ENCODE measurements at regions of chr7 and their contacts with region 1.

Region 1: DNA sequence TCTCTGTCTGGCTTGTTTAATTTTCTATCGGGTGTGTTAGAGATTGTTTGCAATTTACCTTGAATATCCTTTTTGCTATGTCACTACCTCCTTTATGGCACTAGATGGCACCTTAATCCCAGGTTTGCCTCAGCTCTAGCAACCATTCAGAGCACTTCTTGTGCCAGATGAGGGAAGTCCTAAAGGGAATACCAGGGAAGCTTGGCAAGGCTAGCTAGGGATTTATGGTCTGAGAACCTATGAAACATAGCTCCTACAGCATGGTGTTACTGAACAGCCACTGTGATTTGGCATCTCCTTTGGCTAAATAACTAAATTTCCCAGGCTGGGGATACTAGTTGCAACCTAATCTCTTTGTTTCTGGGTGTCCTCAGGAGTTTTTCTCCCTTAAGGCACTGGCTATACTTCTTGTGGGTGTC is 69.0 kb upstream of the VOPP1 start:
- DNase-seq: peak; percentile 84
- H3K4me3 Mint-ChIP-seq: no peak overlapping the region
- H3K27ac Mint-ChIP-seq: no peak overlapping the region
- H3K4me1 Mint-ChIP-seq: no peaks in the 10 kb centered on the region
- H3K27me3 Mint-ChIP-seq: no peaks in the 10 kb centered on the region
- CTCF ChIP-seq: peak; percentile 64

Region 2: DNA sequence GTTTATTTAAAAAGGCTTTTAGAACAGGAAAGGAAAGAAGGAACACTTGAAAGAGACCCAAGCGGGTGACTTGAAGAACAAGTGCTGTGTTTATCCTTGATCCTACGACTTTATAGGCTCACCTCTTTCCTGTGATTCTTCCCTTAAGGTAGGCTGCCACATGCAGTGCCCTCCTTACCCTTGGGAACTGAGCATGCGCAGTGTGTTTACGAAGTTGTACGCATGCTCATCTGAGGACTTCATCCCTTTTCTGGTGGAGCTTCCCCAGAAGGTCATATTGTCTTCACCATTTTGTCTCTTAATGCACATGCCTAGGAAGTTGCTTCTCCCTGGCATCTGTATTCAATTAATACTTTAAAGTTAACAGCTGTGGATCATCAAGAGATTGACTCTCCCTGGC is 19.0 kb before region 1 on chr7:
- CTCF ChIA-PET with region 1: interaction called, 12 read pairs
- POLR2A ChIA-PET with region 1: no interaction called
- intact Hi-C with region 1: no loop called
- DNase-seq: no peak
- H3K4me3 Mint-ChIP-seq: no peak overlapping the region
- H3K27ac Mint-ChIP-seq: no peak overlapping the region
- H3K4me1 Mint-ChIP-seq: no peaks in the 10 kb centered on the region
- H3K27me3 Mint-ChIP-seq: no peaks in the 10 kb centered on the region
- CTCF ChIP-seq: no peak

Region 3: DNA sequence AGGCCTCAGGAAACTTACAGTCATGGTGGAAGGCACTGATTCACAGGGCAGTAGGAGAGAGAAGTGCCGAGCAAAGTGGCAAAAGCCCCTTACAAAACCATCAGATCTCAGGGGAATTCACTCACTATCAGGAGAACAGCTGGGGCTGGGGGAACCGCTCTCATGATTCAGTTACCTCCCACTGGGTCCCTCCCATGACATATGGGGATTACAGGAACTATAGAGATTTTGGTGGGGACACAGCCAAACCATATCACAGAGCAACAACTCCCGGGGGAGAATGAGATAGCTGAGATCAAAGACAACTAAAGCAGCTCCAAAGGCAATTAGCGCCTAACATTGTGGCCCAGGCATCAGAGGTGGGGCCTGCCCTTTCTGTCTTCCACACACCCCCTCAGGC is 16.4 kb after region 1 on chr7:
- CTCF ChIA-PET with region 1: interaction called, 15 read pairs
- POLR2A ChIA-PET with region 1: no interaction called
- intact Hi-C with region 1: no loop called
- DNase-seq: no peak
- H3K4me3 Mint-ChIP-seq: no peak overlapping the region
- H3K27ac Mint-ChIP-seq: no peak overlapping the region
- H3K4me1 Mint-ChIP-seq: no peaks in the 10 kb centered on the region
- H3K27me3 Mint-ChIP-seq: no peaks in the 10 kb centered on the region
- CTCF ChIP-seq: no peak

Region 4: DNA sequence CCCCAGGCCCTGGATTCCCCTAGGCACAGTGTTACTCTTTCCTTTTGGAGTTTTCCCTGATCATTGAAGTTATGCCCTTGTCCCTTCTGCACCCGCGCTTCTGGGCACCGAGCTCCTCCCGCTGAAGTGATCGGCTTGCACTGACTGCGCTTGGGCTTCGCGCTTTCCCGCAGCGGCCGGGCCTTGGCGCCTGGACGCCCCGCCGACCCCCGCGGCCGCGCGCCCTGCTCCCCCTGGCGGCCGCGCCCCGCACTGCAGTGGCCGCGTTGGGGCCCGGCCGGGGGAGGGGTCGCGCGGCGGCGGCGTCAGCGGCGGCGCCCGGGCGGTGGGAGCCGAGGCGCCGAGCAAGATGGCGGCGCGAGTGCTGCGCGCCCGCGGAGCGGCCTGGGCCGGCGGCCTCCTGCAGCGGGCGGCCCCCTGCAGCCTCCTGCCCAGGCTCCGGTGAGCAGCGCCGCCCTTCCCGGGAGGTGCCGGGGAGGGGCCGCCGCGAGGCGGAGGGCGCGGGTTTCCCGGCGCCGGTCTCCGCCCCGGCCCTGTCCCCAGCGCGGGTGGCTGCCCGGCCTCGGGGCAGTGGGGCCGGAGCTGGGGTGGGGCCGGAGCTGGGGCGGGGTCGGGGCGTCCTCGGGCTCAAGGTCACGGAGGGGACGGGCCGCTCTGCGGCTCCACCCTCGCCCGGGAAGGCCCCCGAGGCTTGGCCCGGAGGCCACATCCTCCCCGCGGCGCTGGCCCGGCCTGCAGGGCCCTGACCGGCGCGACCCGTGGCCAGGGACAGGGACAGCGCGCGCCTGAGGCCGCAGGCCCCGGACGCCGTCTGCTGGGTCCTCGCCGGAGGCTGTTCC is 323.2 kb after region 1 on chr7 and contains the start of gene NIPSNAP2:
- CTCF ChIA-PET with region 1: interaction called, 22 read pairs
- POLR2A ChIA-PET with region 1: interaction called, 14 read pairs
- intact Hi-C with region 1: loop called (anchors 2 kb)
- DNase-seq: peak; percentile 49
- H3K4me3 Mint-ChIP-seq: peak within 1 kb of the TSS; percentile 70
- H3K27ac Mint-ChIP-seq: peak within 1 kb of the TSS; percentile 78
- H3K4me1 Mint-ChIP-seq: peaks cover 25% of the 10 kb centered on the region
- H3K27me3 Mint-ChIP-seq: no peaks in the 10 kb centered on the region
- CTCF ChIP-seq: peak; percentile 49
- total RNA-seq, gene NIPSNAP2: 57.9 and 62.8 TPM in 2 replicates

Region 5: DNA sequence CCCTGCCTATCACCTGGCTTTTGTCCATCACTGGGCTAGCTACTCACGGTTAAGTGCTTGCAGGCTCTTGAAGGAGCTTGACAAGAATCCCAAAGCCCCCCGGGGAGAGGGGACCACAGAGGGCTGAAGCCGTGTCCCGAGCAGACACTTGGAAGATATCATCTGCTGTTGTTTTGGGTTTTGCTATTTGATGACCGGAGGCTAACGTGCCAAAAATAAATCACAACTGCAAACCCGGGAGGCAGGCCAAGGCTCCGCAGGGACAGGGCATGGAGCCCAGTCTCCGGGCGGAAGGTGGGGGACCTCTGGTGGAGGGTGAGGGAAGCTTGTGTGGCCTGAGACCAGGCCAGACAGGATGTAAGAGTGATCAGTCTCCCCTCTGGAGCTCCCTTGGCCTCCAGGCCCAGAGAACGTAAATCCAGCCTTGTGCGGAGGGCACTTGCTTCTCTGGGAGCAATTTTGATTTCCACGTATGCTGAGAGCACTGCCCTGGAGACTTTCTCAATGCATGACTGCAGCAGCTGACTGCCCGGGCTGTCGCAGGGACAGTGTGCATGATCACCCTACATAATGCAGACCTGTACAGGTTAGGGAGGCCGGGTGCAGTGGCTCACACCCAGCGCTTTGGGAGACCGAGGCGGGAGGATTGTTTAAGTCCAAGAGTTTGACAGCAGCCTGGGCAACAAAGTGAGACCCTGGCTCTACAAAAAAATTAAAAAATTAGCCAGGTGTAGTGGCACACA is 451.7 kb after region 1 on chr7 and contains the start of gene PHKG1:
- CTCF ChIA-PET with region 1: interaction called, 16 read pairs
- POLR2A ChIA-PET with region 1: no interaction called
- intact Hi-C with region 1: no loop called
- DNase-seq: peak; percentile 84
- H3K4me3 Mint-ChIP-seq: no peak within 1 kb of the TSS
- H3K27ac Mint-ChIP-seq: no peak within 1 kb of the TSS
- H3K4me1 Mint-ChIP-seq: peaks cover 5% of the 10 kb centered on the region
- H3K27me3 Mint-ChIP-seq: no peaks in the 10 kb centered on the region
- CTCF ChIP-seq: peak; percentile 31
- total RNA-seq, gene PHKG1: 1.2 and 2.4 TPM in 2 replicates

Measured in MCF 10A (cell line).